Tibial artery (tissue), 4 donors: ENCODE measurements at regions of chr9 and their contacts with region 1.

Region 1: DNA sequence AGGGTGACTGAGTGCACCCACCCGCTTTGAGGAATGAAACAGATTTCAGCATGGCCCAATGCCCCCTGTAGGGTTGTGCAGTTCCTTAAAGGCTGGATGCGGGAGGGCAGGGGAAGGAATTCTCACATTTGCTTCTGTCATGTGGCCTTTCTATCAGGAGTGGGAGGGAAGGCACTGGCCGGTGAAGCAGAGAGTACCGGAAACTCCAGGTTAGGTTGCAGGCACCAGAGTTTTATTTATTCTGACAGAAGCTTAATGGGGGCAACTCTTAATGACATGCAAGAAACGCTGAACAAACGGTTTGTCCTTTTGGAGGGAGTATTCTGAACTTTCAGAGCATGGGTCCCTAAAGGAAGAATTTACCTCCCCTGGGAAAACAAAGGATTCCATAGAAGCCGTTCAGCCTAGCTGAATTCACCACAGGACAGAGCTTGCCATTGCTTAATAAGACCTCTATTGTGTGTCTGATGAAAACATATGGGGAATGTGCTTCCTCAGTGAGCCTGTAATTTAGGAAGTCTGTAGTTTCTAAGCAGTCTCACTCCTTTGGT is 44.1 kb upstream of the EQTN start:
- DNase-seq: no peak
- H3K4me3 ChIP-seq: no peak overlapping the region
- H3K27ac ChIP-seq: peak overlapping the region; percentile 66 to 67
- H3K4me1 ChIP-seq: peaks cover 10 to 65% (median 51%) of the 10 kb centered on the region in 4 donors
- H3K27me3 ChIP-seq: no peaks in the 10 kb centered on the region
- CTCF ChIP-seq: no peak

Region 2: GRCh38 chr9:27168496-27168895 is 172.5 kb before region 1 on chr9:
- intact Hi-C with region 1: no loop called
- DNase-seq: no peak
- H3K4me3 ChIP-seq: no peak overlapping the region
- H3K27ac ChIP-seq: no peak overlapping the region
- H3K4me1 ChIP-seq: no peaks in the 10 kb centered on the region
- H3K27me3 ChIP-seq: no peaks in the 10 kb centered on the region
- CTCF ChIP-seq: no peak

Region 3: GRCh38 chr9:27529316-27530278 is 188.6 kb after region 1 on chr9 and contains the start of gene MOB3B:
- intact Hi-C with region 1: loop called (anchors 5 kb)
- DNase-seq: peak; percentile 81 to 90
- H3K4me3 ChIP-seq: peak within 1 kb of the TSS; percentile 65 to 90
- H3K27ac ChIP-seq: peak within 1 kb of the TSS; percentile 91 to 92
- H3K4me1 ChIP-seq: peaks cover 0 to 44% (median 18%) of the 10 kb centered on the region in 4 donors
- H3K27me3 ChIP-seq: no peaks in the 10 kb centered on the region
- CTCF ChIP-seq: peak; percentile 94